ENCODE measurements at regions of chr17 and their contacts with region 1.

Region 1: GRCh38 chr17:5272322-5272721 is 9.8 kb upstream of the RABEP1 start:
- DNase-seq: no peak
- H3K4me3 ChIP-seq: no peak overlapping the region
- H3K27ac ChIP-seq: no peak overlapping the region
- H3K4me1 ChIP-seq: no peaks in the 10 kb centered on the region
- H3K27me3 ChIP-seq: no peaks in the 10 kb centered on the region
- CTCF ChIP-seq: no peak
- POLR2A ChIP-seq: no peak

Region 2: DNA sequence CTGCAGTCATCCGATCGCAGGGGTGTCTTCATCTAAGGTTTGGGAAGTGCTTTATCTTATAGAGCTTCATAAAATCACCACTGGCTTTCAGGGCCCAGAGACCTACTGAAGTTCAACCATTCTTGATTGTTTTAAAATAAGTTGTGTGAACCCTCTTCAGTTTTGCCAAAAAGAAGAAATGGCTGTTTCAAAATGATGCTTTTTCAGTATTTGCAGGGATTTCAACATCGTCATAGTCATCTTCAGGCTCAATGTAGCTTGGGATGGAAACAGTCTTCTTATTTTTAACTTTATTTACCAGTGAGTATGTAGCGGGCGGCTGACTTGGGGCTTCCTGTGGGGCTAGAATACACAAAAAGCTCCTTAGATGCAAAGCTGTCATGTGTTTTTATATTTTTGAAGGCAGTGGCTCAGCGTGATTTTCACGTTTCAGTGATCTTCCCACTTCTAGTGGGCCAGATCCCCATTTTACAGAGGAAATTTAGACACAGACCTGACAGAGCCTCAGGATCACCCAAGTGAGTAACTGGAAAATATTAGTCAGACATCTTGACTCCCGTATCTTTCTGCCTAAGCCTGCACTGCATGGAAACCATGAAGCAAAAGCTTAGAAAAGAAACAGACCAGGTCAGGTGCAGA is 61.6 kb before region 1 on chr17:
- intact Hi-C with region 1: loop called (anchors 10 kb)
- DNase-seq: no peak
- H3K4me3 ChIP-seq: no peak overlapping the region
- H3K27ac ChIP-seq: no peak overlapping the region
- H3K4me1 ChIP-seq: no peaks in the 10 kb centered on the region
- H3K27me3 ChIP-seq: no peaks in the 10 kb centered on the region
- CTCF ChIP-seq: no peak
- POLR2A ChIP-seq: no peak

Region 3: GRCh38 chr17:5304636-5305035 is 32.3 kb after region 1 on chr17:
- intact Hi-C with region 1: no loop called
- DNase-seq: no peak
- H3K4me3 ChIP-seq: no peak overlapping the region
- H3K27ac ChIP-seq: no peak overlapping the region
- H3K4me1 ChIP-seq: peaks cover 0 to 4% of the 10 kb centered on the region in 2 donors
- H3K27me3 ChIP-seq: no peaks in the 10 kb centered on the region
- CTCF ChIP-seq: no peak
- POLR2A ChIP-seq: no peak

Region 4: GRCh38 chr17:5516060-5516792 is 243.9 kb after region 1 on chr17:
- intact Hi-C with region 1: no loop called
- DNase-seq: no peak
- H3K4me3 ChIP-seq: no peak overlapping the region
- H3K27ac ChIP-seq: no peak overlapping the region
- H3K4me1 ChIP-seq: no peaks in the 10 kb centered on the region
- H3K27me3 ChIP-seq: no peaks in the 10 kb centered on the region
- CTCF ChIP-seq: no peak
- POLR2A ChIP-seq: no peak

Measured in thyroid gland (tissue), 4 donors.